ENCODE measurements at regions of chr13 and their contacts with region 1.

Region 1: GRCh38 chr13:74133657-74134201 is 475 bp downstream of the KLF12 start:
- DNase-seq: peak; percentile 87
- H3K4me3 Mint-ChIP-seq: peak overlapping the region; percentile 91
- H3K27ac Mint-ChIP-seq: peak overlapping the region; percentile 96
- H3K4me1 Mint-ChIP-seq: peaks cover 33% of the 10 kb centered on the region
- H3K27me3 Mint-ChIP-seq: no peaks in the 10 kb centered on the region

Region 2: GRCh38 chr13:73715114-73715910 is 418.4 kb before region 1 on chr13:
- CTCF ChIA-PET with region 1: no interaction called
- intact Hi-C with region 1: loop called (anchors 1 kb)
- DNase-seq: peak; percentile 76
- H3K4me3 Mint-ChIP-seq: peak overlapping the region; percentile 68
- H3K27ac Mint-ChIP-seq: peak overlapping the region; percentile 68
- H3K4me1 Mint-ChIP-seq: peaks cover 53% of the 10 kb centered on the region
- H3K27me3 Mint-ChIP-seq: no peaks in the 10 kb centered on the region

Region 3: GRCh38 chr13:73943137-73943964 is 190.4 kb before region 1 on chr13:
- CTCF ChIA-PET with region 1: interaction called, 3 read pairs
- intact Hi-C with region 1: loop called (anchors 1 kb)
- DNase-seq: no peak
- H3K4me3 Mint-ChIP-seq: peak overlapping the region; percentile 33
- H3K27ac Mint-ChIP-seq: peak overlapping the region; percentile 74
- H3K4me1 Mint-ChIP-seq: peaks cover 74% of the 10 kb centered on the region
- H3K27me3 Mint-ChIP-seq: no peaks in the 10 kb centered on the region

Region 4: GRCh38 chr13:74115138-74115537 is 18.6 kb before region 1 on chr13:
- CTCF ChIA-PET with region 1: no interaction called
- intact Hi-C with region 1: loop called (anchors 1 kb)
- DNase-seq: no peak
- H3K4me3 Mint-ChIP-seq: no peak overlapping the region
- H3K27ac Mint-ChIP-seq: peak overlapping the region; percentile 41
- H3K4me1 Mint-ChIP-seq: peaks cover 75% of the 10 kb centered on the region
- H3K27me3 Mint-ChIP-seq: no peaks in the 10 kb centered on the region

Region 5: DNA sequence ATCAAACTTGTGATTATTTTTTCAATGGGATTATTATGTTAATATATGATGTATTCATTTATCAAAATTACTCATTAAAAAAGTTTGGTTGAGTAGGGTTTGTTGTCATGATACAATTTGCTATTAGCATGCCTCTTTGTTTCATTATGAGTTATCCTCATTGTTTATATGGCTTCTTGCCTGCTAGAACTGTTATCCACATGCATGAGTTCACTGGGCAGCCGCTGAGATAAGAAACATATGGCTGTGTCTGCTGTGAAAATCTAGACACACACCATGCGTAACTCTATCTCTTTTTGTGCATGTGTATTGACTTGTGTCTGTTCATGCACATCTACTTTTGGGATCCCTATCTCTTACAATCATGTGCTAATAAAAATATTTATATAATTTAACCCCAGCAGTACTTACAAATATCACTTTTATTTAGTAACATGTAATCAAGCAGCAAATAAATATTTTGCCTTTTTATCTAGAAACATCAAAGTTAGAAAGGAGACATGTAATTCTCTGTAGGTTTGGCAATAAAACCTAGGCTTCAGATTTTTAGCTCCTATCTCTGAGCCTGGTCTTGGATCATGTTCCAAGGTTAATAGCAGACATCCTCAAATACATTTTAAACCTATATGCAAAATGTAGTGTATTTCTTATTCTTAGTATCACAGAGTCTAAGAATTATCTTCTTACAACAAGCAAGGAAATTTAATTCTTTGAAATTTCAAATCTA is 11.7 kb after region 1 on chr13:
- CTCF ChIA-PET with region 1: no interaction called
- intact Hi-C with region 1: no loop called
- DNase-seq: no peak
- H3K4me3 Mint-ChIP-seq: no peak overlapping the region
- H3K27ac Mint-ChIP-seq: no peak overlapping the region
- H3K4me1 Mint-ChIP-seq: no peaks in the 10 kb centered on the region
- H3K27me3 Mint-ChIP-seq: no peaks in the 10 kb centered on the region

Region 6: DNA sequence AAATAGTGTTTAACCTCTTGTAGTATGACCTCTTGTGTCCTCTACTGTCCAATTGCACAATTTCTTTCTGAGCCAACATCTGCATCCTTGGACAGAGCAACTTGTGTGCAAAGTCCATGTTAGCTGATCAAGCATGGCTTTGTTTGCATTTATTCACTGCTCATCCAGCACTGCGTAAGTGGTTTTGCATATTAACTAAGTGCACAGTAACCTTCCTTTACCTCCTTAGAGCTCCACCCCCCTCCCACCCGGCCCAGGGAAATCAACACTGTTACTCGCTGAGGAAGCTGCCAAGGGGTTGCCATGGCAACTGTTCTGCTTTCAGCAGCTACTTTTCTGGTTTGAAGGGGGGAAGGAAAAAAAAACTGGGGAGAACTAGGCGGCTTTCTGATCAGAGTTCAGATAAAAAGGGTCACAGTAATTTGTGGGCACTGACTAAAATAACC is 154.0 kb after region 1 on chr13:
- CTCF ChIA-PET with region 1: interaction called, 22 read pairs
- intact Hi-C with region 1: loop called (anchors 1 kb)
- DNase-seq: peak; percentile 88
- H3K4me3 Mint-ChIP-seq: peak overlapping the region; percentile 73
- H3K27ac Mint-ChIP-seq: peak overlapping the region; percentile 61
- H3K4me1 Mint-ChIP-seq: peaks cover 66% of the 10 kb centered on the region
- H3K27me3 Mint-ChIP-seq: no peaks in the 10 kb centered on the region

Region 7: DNA sequence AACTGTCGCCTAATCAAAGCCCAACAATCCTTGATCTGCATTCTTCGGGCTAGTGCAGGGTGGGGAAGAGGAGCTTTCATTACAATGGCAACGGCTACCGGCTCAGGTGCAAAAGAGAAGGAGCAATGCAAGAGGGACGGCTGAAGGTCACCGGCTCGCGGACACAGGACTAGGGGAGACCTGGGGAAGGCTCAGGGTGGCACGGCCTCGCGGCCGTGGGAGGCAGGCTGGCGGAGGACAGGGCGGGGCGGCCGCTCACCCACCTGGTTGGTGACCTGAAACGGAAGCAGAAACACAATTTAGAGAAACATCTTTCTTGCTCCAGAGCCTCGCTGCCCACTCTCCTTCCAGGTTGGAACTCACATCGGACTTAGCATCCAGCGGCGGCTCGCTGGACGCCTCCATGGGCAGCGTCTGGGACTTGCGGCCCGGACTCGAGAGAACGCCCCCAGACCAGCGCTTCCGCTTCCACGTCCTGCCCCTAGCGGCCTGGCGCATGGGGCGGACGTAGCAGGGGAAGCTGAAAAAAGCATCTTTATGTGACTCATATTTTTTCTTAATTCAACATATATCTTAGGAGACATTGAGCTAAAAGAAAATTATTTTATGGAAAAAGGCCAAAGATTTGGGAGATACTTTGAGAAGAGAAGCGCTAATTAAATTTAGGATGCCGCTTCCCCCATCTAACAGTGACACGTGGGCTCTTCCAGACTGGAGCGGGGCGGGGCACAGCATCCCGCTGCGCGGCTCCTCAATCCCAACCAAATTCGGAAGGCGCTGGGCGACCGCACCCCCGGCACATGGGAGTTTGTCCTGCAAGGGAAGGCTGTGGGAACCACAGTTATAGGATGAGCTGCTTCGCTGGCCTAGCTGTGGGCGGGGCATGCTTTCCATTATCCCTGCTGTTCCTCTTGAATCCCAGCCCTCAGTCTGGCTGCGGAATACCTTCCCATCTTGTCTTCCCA is 1404.0 kb after region 1 on chr13 and contains the start of gene COMMD6:
- CTCF ChIA-PET with region 1: no interaction called
- intact Hi-C with region 1: loop called (anchors 10 kb)
- DNase-seq: peak; percentile 70
- H3K4me3 Mint-ChIP-seq: peak within 1 kb of the TSS; percentile 93
- H3K27ac Mint-ChIP-seq: peak within 1 kb of the TSS; percentile 81
- H3K4me1 Mint-ChIP-seq: peaks cover 25% of the 10 kb centered on the region
- H3K27me3 Mint-ChIP-seq: no peaks in the 10 kb centered on the region
- total RNA-seq, gene COMMD6: 95.4 to 105 TPM

Measured in activated naive CD4-positive, alpha-beta T cell treated with anti-CD3 and anti-CD28 coated beads for 36 hours (primary cell).